ENCODE measurements at regions of chr17 and their contacts with region 1.

Region 1: DNA sequence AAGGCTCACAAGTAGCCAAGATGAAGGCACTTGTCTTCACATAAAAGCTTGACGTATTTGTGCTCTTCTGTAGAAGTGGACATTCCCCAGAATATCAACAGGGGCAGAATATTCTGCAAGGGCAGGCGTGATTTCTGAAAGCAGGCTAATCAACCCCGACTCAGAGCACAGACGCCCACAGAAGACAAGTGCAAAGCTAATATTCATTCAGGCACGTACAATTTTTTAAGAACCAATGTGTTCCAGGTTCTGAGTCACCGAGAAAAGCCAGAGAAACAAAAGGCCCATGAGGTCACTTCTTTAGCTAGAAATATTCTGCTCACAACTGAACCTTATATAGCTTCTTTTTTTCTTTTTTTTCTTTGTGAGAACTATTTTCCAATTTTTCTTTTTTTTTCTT is 121.6 kb downstream of the DNAH9 start:
- DNase-seq: no peak
- ATAC-seq: peak; percentile 71

Region 2: DNA sequence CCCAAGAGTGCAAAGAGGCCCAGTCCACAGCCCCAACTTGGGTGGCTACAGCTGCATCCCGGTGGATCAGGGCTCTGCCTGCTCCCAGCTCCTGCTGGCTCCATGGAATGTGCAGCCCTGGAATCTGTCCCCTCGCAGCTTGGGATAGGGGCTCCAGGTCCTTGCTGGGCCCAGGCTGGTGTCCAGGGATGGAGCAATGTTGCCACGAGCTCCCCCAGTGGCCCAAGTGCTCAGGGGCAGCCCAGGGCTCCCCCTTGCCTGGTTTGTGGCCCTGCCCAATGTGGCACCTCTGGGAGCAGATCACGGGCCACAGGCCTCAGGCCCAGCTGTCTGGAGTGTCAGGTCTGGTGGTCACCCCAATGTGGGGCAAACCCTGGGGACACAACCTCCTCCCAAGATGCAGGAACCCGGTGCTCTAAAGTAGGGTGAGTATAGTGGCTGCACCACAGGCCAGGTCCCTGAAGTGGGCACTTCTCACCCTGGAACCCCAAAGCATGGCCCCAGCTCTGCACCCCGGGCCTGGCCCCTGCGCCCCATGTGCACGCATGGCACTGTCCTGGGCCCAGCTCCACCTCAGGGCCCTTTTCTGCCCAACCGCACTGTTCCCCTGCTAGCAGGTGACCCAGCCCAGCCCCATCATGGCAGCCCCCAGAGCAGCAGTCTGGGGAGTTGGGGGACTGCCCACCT is 136.4 kb before region 1 on chr17:
- intact Hi-C with region 1: no loop called
- DNase-seq: no peak
- ATAC-seq: peak; percentile 15

Region 3: GRCh38 chr17:12568358-12569251 is 848.7 kb after region 1 on chr17:
- intact Hi-C with region 1: loop called (anchors 10 kb)
- DNase-seq: no peak
- ATAC-seq: no peak

Measured in sciatic nerve (tissue), 2 donors.